OCI-LY7 (cell line): ENCODE measurements at regions of chr13 and their contacts with region 1.

Region 1: DNA sequence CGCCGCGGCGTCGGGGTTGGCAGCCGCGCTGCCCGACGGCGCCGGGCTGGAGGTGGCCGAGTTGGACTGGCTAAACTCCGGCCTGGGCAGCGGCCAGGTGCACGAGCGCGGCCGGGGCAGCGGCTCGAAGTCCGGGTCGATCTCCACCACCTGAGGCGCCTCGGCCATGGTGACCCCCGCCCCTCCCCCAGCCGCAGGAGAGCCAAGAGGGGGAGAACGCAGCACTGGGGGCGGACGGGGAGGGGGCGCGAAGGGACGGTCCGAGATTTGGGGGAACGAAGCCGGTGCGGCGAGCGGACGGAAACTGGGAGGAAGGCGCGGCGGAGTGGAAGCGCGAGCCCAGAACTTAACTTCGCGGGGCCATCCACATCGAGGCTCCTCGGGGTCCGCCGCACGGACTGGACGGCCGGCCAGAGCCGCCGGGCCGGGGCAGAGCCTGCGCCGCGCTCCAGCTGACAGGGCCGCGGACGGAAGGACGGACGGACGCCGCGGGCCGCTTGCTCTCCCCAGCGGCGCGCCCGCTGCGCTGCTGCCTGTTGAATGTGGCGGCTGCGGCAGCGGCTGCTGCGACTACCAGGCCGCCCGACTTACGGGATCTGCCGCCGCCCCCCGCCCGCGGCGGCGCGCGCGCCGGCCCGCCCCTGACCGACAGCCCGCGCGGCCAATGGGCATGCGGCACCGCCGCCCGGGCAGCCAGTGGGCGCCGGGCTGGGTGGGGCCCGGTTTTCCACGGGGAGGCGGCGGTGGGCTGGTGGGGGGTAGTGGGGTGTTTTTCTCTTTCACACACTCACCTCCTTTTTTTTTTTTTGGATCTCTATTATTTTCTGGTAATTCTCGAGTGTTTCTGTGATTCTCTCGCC is at the start of gene FOXO1:
- DNase-seq: peak; percentile 93
- H3K4me3 ChIP-seq: peak within 1 kb of the TSS; percentile 91
- H3K27ac ChIP-seq: peak within 1 kb of the TSS; percentile 83
- H3K4me1 ChIP-seq: peaks cover 39% of the 10 kb centered on the region
- CTCF ChIP-seq: no peak
- total RNA-seq, gene FOXO1: 24.0 and 29.2 TPM in 2 replicates

Region 2: GRCh38 chr13:40069173-40070044 is 596.9 kb before region 1 on chr13:
- CTCF ChIA-PET with region 1: interaction called, 3 read pairs
- POLR2A ChIA-PET with region 1: no interaction called
- intact Hi-C with region 1: loop called (anchors 5 kb)
- DNase-seq: peak; percentile 81
- H3K4me3 ChIP-seq: no peak overlapping the region
- H3K27ac ChIP-seq: no peak overlapping the region
- H3K4me1 ChIP-seq: peaks cover 24% of the 10 kb centered on the region
- CTCF ChIP-seq: peak; percentile 98

Region 3: DNA sequence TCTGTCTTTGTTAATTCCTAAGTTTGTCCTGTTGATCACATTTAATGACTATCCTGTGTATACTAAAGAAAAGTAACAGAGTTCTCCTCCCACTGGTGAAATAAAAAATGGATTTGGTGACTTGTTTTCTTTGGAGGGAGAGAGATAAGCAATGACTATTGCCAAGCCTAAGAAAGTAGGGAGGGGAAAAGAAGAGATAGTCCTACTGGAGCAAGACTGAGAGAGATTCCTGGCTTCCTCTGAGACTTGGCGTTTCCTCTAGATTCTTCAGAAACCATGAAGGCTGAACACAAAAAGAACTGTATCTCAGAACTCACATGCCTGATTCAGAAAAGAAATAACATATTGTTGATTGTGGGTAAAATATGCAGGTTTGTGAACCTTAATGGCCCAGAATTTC is 406.4 kb before region 1 on chr13:
- CTCF ChIA-PET with region 1: no interaction called
- POLR2A ChIA-PET with region 1: no interaction called
- intact Hi-C with region 1: no loop called
- DNase-seq: no peak
- H3K4me3 ChIP-seq: no peak overlapping the region
- H3K27ac ChIP-seq: no peak overlapping the region
- H3K4me1 ChIP-seq: peaks cover 7% of the 10 kb centered on the region
- CTCF ChIP-seq: no peak

Region 4: DNA sequence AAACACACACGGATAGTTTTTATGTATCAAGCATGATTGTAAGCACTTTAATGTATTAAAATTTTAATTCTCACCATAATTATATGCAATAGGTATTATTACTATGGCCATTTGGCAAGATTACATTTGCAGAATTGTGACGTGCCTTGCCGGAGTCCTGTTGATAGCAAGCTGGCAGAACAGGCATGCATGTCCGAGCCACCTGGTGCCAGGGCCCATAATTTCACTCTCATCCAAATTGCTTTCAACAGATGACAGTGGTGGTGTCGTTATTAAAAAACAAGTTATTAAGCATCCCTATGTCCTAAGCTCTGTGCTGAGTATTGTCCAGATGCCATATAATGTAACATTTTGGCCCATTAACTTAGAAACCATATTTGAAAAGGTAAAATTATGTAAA is 374.2 kb before region 1 on chr13:
- CTCF ChIA-PET with region 1: no interaction called
- POLR2A ChIA-PET with region 1: no interaction called
- intact Hi-C with region 1: loop called (anchors 10 kb)
- DNase-seq: no peak
- H3K4me3 ChIP-seq: no peak overlapping the region
- H3K27ac ChIP-seq: no peak overlapping the region
- H3K4me1 ChIP-seq: no peaks in the 10 kb centered on the region
- CTCF ChIP-seq: no peak

Region 5: DNA sequence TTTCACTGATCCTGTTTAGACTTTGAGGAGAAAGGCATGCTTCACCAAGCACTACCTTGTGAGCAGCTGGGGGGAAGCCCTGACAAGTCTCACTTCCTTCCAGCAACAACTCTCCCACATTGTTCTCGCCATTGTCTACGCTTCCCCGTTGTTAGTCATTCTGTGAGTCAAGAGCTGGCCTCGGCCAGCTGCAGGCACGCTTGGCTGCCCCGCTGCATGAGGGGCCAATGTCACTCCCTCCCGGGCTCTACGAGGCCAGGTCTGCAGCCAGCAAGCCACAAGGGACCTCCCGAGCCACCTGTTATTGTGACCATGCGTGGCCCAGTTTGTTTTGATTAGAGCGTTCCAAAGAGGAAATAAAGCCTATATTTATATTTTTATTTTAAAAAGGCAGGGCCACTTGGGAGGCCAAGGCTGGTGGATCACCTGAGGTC is 220.7 kb before region 1 on chr13:
- CTCF ChIA-PET with region 1: no interaction called
- POLR2A ChIA-PET with region 1: interaction called, 6 read pairs
- intact Hi-C with region 1: loop called (anchors 1 kb)
- DNase-seq: peak; percentile 100
- H3K4me3 ChIP-seq: no peak overlapping the region
- H3K27ac ChIP-seq: peak overlapping the region; percentile 92
- H3K4me1 ChIP-seq: peaks cover 80% of the 10 kb centered on the region
- CTCF ChIP-seq: no peak

Region 6: DNA sequence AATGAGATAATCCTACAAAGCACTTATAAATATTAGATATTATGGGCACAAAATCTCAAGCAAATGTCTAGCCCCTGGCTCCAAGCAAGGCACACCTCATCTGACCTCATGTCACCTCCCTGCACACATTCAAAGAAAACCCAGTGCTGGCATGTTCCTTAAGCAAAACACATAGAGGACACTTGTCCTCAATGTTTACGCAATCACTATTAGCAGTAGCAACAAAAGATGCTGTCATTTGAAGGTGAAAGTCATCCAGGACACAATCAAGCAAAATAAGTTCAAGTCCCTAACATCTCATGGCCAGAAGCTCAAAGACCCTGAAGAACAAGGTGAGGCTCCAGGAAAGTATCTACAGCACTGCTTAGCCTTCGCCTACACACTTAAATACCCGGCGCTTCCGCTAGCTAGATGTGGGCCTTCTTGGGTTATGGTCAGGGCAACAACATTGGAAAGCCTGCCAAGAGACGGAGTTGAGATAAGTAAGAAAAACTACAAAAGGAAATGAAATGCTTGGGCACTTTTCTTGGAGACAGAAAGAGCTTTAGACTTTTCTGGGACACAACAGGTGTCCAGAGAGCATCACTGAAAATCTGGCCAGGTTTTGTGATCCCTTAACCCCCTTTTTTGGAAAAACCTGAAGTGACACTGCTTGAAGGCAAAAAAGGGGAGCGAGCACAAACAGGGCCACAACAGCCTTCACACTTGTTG is 85.6 kb before region 1 on chr13:
- CTCF ChIA-PET with region 1: no interaction called
- POLR2A ChIA-PET with region 1: interaction called, 7 read pairs
- intact Hi-C with region 1: loop called (anchors 2 kb)
- DNase-seq: peak; percentile 80
- H3K4me3 ChIP-seq: peak overlapping the region; percentile 55
- H3K27ac ChIP-seq: peak overlapping the region; percentile 99
- H3K4me1 ChIP-seq: peaks cover 99% of the 10 kb centered on the region
- CTCF ChIP-seq: no peak

Region 7: GRCh38 chr13:40644838-40645604 is 21.3 kb before region 1 on chr13:
- CTCF ChIA-PET with region 1: no interaction called
- POLR2A ChIA-PET with region 1: interaction called, 21 read pairs
- intact Hi-C with region 1: loop called (anchors 2 kb)
- DNase-seq: peak; percentile 56
- H3K4me3 ChIP-seq: peak overlapping the region; percentile 37
- H3K27ac ChIP-seq: peak overlapping the region; percentile 45
- H3K4me1 ChIP-seq: peaks cover 94% of the 10 kb centered on the region
- CTCF ChIP-seq: no peak

Region 8: GRCh38 chr13:40777166-40777808 is 111.0 kb after region 1 on chr13:
- CTCF ChIA-PET with region 1: interaction called, 5 read pairs
- POLR2A ChIA-PET with region 1: no interaction called
- intact Hi-C with region 1: loop called (anchors 1 kb)
- DNase-seq: peak; percentile 86
- H3K4me3 ChIP-seq: peak overlapping the region; percentile 48
- H3K27ac ChIP-seq: peak overlapping the region; percentile 59
- H3K4me1 ChIP-seq: peaks cover 51% of the 10 kb centered on the region
- CTCF ChIP-seq: peak; percentile 99

Region 9: DNA sequence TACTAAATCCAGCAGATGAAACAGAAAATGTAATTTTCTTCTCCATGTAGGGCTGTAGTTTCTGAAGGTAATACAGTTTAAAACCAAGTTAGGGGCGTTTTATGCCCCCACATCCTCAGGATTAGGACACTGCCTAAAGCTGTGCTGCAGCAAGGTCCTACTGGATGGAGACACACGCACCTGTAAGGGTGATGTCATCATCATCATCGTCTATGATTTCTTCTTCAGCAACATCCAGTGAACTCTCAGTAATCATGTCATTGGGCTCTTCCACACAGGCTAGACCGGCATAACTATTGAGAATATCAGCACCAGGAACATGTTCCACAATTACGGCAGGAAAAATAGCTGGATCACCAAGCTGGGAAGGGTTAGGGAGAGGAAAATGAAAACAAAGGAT is 292.4 kb after region 1 on chr13:
- CTCF ChIA-PET with region 1: no interaction called
- POLR2A ChIA-PET with region 1: no interaction called
- intact Hi-C with region 1: no loop called
- DNase-seq: no peak
- H3K4me3 ChIP-seq: no peak overlapping the region
- H3K27ac ChIP-seq: no peak overlapping the region
- H3K4me1 ChIP-seq: peaks cover 32% of the 10 kb centered on the region
- CTCF ChIP-seq: no peak